ENCODE measurements at regions of chr19 and their contacts with region 1.

Region 1: DNA sequence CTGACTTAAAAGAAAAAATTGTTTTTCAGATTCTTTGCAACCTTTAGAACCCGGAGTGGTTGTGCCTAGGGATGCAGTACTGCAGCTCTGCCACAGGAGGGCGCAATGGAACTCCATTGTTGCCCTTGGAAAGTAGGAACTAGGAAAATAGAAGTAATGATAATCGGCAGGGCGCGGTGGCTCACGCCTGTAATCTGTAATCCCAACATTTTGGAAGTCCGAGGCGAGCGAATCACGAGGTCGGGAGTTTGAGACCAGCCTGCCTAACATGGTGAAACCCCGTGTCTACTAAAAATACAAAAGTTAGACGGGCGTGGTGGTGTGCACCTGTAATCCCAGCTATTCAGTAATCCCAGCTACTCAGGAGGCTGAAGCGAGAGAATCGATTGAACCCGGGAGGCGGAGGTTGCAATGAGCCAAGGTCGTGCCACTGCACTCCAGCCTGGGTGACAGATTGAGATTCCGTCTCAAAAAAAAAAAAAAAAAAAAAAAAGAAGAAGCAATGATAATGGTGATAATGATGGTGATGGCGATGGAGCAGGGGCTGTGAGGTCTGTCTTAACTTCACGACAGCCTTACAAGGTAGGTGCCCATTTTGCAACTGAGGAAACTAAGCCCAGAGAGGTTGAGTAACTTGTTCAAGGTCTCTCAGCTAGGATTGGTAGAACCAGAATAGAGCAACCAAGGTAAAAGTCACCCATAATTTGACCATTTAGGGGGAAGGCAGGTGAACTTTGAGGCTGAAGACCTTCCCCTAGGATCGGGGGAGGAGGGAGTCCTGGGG is 5.5 kb upstream of the ADAMTS10 start:
- DNase-seq: peak in 4 of 5 donors; percentile 25 to 65 (median 51)
- H3K4me3 ChIP-seq: no peak overlapping the region
- H3K27ac ChIP-seq: no peak overlapping the region
- H3K4me1 ChIP-seq: peaks cover 4% of the 10 kb centered on the region
- H3K27me3 ChIP-seq: no peaks in the 10 kb centered on the region
- CTCF ChIP-seq: peak; percentile 26 to 66 (median 61)
- EP300 ChIP-seq: no peak
- POLR2A ChIP-seq: no peak

Region 2: DNA sequence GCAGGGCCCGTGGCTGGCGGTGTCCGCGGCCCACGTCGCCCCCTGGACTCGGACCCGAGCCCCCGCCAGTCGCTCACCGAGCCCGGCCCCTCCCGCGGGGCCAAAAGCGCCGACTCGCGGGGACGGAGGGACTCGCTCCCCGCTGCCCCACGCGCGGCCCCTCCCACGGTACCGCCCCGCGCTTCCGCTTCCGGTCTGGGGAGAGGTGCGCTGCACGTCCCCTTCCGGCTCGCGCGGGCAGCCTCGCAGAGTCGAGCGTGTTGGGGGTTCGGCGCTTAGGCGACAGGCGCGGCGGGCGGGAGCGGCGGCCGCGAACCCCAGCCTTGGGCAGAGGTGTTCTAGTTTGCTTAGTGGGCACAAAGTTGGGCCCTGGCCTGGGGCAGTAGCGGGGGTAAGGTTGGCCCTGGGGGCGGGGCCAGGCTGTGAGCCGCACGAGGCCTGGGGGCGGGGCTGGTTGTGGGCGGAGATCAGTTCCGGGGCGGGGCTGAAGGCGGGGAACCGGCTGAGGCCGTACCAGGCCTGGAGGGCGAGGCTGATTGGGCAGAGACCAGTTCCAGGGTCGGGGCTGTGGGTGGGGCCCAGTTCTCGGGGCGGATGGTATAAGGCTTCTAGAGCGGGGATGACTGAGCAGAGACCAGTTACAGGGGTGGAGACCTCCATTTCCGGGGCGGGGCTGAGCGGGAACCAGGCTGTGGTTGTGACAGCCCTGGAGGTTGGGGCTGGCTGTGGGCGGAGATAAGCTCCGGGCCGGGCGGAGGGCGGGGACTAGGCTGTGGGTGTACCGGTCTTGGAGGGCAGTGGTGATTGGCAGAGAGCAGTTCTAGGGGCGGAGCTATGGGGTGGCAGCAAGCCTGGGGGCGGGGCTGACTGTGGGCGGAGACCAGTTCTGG is 216.4 kb after region 1 on chr19 and contains the starts of genes MBD3L1 and ZNF558:
- intact Hi-C with region 1: loop called in 1 of 4 experiments (anchors 10 kb)
- DNase-seq: peak; percentile 99
- H3K4me3 ChIP-seq: peak within 1 kb of the TSS; percentile 93
- H3K27ac ChIP-seq: peak within 1 kb of the TSS; percentile 42 to 96
- H3K4me1 ChIP-seq: peaks cover 2% of the 10 kb centered on the region
- H3K27me3 ChIP-seq: no peaks in the 10 kb centered on the region
- CTCF ChIP-seq: peak in 2 of 3 donors; percentile 52 to 59
- EP300 ChIP-seq: peak; percentile 58
- POLR2A ChIP-seq: peak; percentile 91
- total RNA-seq, gene MBD3L1: not detected
- total RNA-seq, gene ZNF558: 28.0 to 44.2 (median 34.4) TPM

Measured in ovary (tissue), 10 donors.